ENCODE measurements at regions of chr12 and their contacts with region 1.

Region 1: DNA sequence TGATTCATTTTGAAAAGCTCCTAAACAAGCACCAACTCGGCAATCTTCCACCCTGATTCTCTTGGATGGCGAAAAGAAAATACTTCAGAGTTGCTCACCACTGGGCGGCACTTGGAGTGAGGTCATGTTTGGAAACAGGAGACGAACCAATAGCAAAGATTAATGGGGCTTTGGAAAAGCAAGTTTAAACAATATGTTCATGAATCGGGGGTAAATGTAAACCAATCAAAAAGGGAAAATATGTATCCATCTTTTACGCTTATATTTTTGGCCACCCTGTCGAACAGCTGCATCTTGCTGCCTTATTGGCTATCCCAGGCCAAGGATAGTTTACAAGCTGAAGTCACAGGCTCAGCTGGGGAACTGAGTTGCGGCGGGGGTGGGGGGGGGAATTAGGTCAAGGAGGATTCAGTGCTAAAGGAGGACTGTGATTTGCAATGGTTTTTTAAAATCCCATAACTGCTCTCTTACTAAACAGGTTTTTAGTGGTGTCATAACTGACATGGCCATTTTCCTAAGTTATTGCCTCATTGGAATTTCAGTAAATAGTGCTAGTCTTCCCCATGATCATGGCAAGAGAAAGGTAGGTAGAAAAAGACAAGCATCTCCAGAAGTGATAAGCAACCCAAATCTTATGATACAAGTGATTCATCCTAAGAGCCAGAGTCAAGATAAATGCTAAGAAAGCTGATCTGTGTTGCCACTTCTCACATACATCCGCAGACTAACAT is 210.6 kb downstream of the PHLDA1 start:
- DNase-seq: no peak

Region 2: DNA sequence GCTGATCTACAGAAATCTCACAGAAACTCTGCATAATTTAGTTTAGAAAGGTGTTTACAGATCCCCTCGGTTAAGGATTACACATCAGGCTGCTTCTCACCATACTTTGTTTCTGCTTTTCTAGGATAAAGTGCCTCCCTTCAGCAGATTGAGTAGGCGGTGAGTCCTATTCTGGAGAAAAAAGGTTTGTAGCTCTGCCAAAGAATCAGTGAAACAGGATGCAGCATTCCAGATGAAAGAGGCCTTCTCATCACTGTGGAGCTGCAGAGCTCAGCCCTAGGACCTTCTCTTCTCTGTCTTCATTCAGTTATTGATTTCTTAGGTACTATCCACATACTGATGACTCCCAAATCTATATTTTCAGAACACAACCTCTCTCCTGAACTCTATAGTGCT is 154.1 kb before region 1 on chr12:
- intact Hi-C with region 1: loop called (anchors 10 kb)
- DNase-seq: no peak

Region 3: DNA sequence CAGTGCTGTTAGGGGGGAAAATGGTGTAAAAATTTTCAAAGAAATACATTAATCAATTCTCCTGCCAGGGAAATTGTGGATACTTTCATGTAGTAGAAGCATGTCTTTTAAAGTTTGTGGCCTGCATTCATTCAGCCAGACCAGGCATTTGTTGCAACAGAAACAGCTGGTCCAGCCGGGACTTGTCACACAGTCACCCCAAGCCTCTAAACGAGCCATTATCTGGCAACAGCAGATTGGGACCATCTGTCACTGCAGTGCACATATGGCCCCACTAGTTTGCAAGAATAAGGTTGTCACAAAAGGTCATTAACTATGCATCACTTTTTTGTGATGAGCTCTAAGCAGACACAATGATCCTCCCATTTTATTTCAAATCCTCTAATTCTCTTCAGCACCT is 16.7 kb after region 1 on chr12:
- intact Hi-C with region 1: no loop called
- DNase-seq: no peak

Region 4: DNA sequence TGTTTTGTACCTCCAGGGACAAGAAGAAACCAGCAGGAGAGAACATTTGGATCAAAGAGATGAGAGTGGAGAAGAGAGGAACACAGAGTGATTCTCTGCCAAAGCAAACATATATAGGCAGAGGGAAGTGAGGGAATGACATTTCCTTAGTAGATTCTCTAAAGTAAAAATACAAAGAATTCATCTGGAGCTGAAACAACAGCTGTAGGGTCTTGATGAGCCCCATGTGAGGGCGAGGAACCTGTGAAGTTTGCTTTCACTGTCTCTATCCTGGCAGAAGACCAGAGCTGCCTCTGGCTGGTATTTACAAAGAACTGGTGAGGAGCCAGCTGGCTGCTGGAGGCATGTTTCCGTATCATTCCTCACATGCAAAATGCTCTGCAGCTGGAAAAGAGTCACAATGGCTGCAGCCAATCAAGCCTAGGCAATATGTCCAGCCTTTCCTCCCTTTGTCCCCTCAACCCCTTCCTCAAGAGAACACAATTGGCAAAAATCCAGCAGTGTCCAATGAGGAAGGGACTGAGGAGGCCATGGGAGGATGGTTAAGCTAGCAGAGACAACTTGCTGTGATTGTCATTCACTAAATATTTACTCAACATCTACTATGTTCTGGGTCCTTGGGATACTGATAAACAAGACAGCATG is 88.1 kb after region 1 on chr12:
- intact Hi-C with region 1: no loop called
- DNase-seq: peak; percentile 87